ENCODE measurements at regions of chr12 and their contacts with region 1.

Region 1: GRCh38 chr12:120856980-120857379 is 47.2 kb downstream of the SPPL3 start:
- H3K4me3 ChIP-seq: no peak overlapping the region
- H3K27ac ChIP-seq: no peak overlapping the region
- H3K4me1 ChIP-seq: peaks cover 6% of the 10 kb centered on the region
- CTCF ChIP-seq: no peak

Region 2: DNA sequence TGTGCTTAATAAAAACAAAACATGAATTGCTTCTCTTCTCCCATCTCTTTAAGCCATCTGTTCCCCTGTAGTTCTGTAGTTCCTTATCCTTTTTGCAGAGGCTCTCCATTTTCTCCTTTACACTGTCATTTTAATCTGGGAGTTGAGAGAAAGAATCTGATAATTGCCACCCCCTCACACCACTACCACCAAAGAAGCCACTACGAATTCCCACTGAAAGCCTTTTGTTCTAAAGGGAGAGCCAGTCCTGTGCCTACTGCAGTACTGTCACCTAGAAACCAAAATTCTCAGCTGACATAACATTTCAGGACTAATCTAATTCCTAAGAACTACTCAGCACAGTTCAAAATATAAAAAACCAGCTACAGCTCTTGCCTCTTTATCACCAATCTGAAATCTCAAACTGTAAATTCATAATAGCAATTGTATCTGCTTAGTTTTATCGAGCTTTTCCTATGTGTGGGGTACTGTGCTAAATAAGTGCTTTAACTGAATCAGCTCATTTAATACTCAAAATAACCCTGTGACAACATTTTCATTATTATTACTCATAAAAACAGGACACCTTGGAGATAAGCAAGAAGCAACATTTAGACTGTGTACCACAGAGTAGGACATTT is 25.2 kb before region 1 on chr12:
- CTCF ChIA-PET with region 1: interaction called, 11 read pairs
- POLR2A ChIA-PET with region 1: no interaction called
- H3K4me3 ChIP-seq: no peak overlapping the region
- H3K27ac ChIP-seq: no peak overlapping the region
- H3K4me1 ChIP-seq: peaks cover 27% of the 10 kb centered on the region; the same call in 1 of the 2 replicates
- CTCF ChIP-seq: no peak

Region 3: GRCh38 chr12:121038861-121039666 is 182.1 kb after region 1 on chr12 and contains the start of gene OASL:
- CTCF ChIA-PET with region 1: no interaction called
- POLR2A ChIA-PET with region 1: no interaction called
- H3K4me3 ChIP-seq: peak within 1 kb of the TSS; percentile 17
- H3K27ac ChIP-seq: no peak within 1 kb of the TSS
- H3K4me1 ChIP-seq: no peaks in the 10 kb centered on the region
- CTCF ChIP-seq: no peak

Region 4: GRCh38 chr12:121060149-121061001 is 203.4 kb after region 1 on chr12:
- CTCF ChIA-PET with region 1: no interaction called
- POLR2A ChIA-PET with region 1: no interaction called
- H3K4me3 ChIP-seq: no peak overlapping the region
- H3K27ac ChIP-seq: no peak overlapping the region
- H3K4me1 ChIP-seq: no peaks in the 10 kb centered on the region
- CTCF ChIP-seq: peak; percentile 62; the same call in 1 of the 2 replicates

Measured in HEK293 (cell line).